Activated CD4-positive, alpha-beta T cell treated with anti-CD3 and anti-CD28 coated beads for 36 hours (primary cell): ENCODE measurements at regions of chr19 and their contacts with region 1.

Region 1: DNA sequence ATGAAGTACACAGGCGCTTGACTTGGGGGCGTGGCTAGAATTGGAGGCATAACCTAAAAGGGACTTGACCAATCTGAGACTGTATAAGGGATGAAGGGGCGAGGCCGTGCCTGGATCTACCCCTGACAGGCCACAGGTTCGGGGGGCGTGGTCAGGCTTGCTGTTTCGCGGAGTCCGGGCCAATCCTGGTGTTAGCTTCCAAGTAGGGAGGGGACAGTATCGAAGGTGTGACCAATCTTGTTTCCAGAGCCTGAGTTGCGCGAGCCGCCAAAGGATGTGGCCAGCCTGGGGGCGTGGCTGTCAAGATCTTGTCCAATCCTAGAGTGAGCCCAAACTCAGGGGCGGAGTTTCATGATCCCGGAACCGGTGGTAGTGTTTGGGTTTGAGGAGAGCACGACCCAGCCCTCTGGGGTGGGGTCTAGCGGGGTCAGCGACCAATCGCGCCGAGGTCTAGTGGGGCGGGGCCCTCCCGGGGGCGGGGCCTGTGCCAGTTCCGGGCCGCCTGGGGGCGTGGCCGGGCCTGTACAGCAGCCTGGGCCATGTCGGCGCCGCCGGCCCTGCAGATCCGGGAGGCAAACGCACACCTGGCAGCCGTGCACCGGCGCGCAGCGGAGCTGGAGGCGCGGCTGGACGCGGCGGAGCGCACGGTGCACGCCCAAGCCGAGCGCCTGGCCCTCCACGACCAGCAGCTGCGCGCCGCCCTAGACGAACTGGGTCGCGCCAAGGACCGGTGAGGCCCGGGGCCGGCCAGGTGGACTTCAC is at the start of gene VMAC:
- DNase-seq: peak; percentile 100
- ATAC-seq: peak; percentile 87
- H3K4me3 Mint-ChIP-seq: peak within 1 kb of the TSS; percentile 94
- H3K27ac Mint-ChIP-seq: peak within 1 kb of the TSS; percentile 98
- H3K4me1 Mint-ChIP-seq: peaks cover 32% of the 10 kb centered on the region
- H3K27me3 Mint-ChIP-seq: no peaks in the 10 kb centered on the region
- total RNA-seq, gene VMAC: 2.3 to 2.8 TPM

Region 2: GRCh38 chr19:4638828-4639530 is 1265.6 kb before region 1 on chr19 and contains the start of gene TNFAIP8L1:
- CTCF ChIA-PET with region 1: no interaction called
- POLR2A ChIA-PET with region 1: no interaction called
- intact Hi-C with region 1: loop called in 1 of 2 experiments (anchors 1 kb)
- DNase-seq: peak; percentile 100
- ATAC-seq: peak; percentile 95
- H3K4me3 Mint-ChIP-seq: peak within 1 kb of the TSS; percentile 90
- H3K27ac Mint-ChIP-seq: peak within 1 kb of the TSS; percentile 97
- H3K4me1 Mint-ChIP-seq: peaks cover 26% of the 10 kb centered on the region
- H3K27me3 Mint-ChIP-seq: no peaks in the 10 kb centered on the region
- total RNA-seq, gene TNFAIP8L1: 14.1 to 15.4 TPM

Region 3: GRCh38 chr19:5665796-5666513 is 238.6 kb before region 1 on chr19:
- CTCF ChIA-PET with region 1: no interaction called
- POLR2A ChIA-PET with region 1: no interaction called
- intact Hi-C with region 1: no loop called
- DNase-seq: no peak
- ATAC-seq: no peak
- H3K4me3 Mint-ChIP-seq: no peak overlapping the region
- H3K27ac Mint-ChIP-seq: peak overlapping the region; percentile 55
- H3K4me1 Mint-ChIP-seq: peaks cover 2% of the 10 kb centered on the region
- H3K27me3 Mint-ChIP-seq: no peaks in the 10 kb centered on the region

Region 4: DNA sequence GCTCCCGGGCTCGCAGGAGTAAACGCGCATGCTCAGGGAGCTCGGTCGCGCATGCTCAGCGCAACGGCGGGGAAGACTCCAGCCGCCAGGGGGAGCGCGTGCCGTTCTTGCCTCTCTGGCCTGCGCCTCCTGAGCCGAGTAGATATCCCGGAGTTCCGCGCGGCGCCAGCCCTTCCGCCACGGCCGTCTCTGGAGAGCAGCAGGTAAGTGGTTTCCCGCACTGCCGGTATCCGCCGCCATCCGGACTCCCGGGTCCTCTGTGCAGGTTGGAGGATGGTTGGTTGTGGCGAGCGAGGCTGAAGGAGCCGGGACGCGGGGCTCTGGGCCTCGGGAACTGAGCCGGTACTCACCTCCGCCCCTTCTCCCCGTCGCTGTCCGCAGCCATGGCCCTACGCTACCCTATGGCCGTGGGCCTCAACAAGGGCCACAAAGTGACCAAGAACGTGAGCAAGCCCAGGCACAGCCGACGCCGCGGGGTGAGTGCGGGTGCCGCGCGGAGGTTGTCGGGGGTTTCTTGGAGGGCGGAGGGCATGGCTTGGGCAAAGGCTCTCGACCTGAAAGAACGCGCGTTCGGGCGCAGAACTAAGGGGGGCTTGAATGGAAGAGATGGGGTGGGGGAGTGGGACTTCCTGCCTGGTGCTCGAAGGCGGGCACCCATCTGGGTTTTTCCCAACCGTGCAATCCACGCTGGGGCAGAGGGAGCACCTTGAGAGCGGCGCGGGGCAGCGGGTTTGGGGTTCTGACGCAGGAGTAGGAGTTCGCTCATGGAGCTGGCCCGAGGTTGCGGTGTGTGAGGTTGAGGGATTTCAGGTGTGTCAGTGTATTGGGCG is 214.2 kb before region 1 on chr19 and contains the start of gene RPL36:
- CTCF ChIA-PET with region 1: no interaction called
- POLR2A ChIA-PET with region 1: interaction called, 3 read pairs
- intact Hi-C with region 1: loop called in 1 of 2 experiments (anchors 1 kb)
- DNase-seq: peak; percentile 100
- ATAC-seq: peak; percentile 54
- H3K4me3 Mint-ChIP-seq: peak within 1 kb of the TSS; percentile 100
- H3K27ac Mint-ChIP-seq: peak within 1 kb of the TSS; percentile 96
- H3K4me1 Mint-ChIP-seq: peaks cover 21% of the 10 kb centered on the region
- H3K27me3 Mint-ChIP-seq: no peaks in the 10 kb centered on the region
- total RNA-seq, gene RPL36: 1,452 to 1,530 TPM

Region 5: DNA sequence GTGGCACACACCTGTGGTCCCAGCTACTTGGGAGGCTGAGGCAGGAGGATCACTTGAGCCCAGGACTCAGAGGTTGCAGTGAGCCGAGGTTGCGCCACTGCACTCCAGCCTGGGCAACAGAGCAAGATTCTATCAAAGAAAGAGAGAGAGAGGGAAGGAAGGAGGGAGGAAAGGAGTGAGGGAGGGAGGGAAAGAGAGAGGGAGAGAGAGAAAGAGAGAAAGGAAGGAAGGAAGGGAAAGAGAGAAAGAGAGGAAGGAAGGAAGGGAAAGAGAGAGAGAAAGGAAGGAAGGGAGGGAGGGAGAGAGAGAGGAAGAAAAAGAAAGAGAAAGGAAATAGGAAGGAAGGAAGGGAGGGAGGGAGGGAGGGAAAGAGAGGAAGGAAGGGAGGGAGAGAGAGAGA is 87.3 kb before region 1 on chr19:
- CTCF ChIA-PET with region 1: no interaction called
- POLR2A ChIA-PET with region 1: no interaction called
- intact Hi-C with region 1: no loop called
- DNase-seq: no peak
- ATAC-seq: no peak
- H3K4me3 Mint-ChIP-seq: no peak overlapping the region
- H3K27ac Mint-ChIP-seq: no peak overlapping the region
- H3K4me1 Mint-ChIP-seq: no peaks in the 10 kb centered on the region
- H3K27me3 Mint-ChIP-seq: peaks cover 3% of the 10 kb centered on the region

Region 6: GRCh38 chr19:5827891-5828660 is 76.5 kb before region 1 on chr19:
- CTCF ChIA-PET with region 1: interaction called, 5 read pairs
- POLR2A ChIA-PET with region 1: interaction called, 25 read pairs
- intact Hi-C with region 1: loop called (anchors 1 kb)
- DNase-seq: peak; percentile 98
- ATAC-seq: peak; percentile 84
- H3K4me3 Mint-ChIP-seq: peak overlapping the region; percentile 92
- H3K27ac Mint-ChIP-seq: peak overlapping the region; percentile 96
- H3K4me1 Mint-ChIP-seq: peaks cover 4% of the 10 kb centered on the region
- H3K27me3 Mint-ChIP-seq: no peaks in the 10 kb centered on the region

Region 7: GRCh38 chr19:6056801-6057650 is 152.5 kb after region 1 on chr19:
- CTCF ChIA-PET with region 1: no interaction called
- POLR2A ChIA-PET with region 1: no interaction called
- intact Hi-C with region 1: no loop called
- DNase-seq: peak; percentile 34
- ATAC-seq: peak; percentile 31
- H3K4me3 Mint-ChIP-seq: no peak overlapping the region
- H3K27ac Mint-ChIP-seq: peak overlapping the region; percentile 56
- H3K4me1 Mint-ChIP-seq: peaks cover 31% of the 10 kb centered on the region
- H3K27me3 Mint-ChIP-seq: peaks cover 4% of the 10 kb centered on the region

Region 8: DNA sequence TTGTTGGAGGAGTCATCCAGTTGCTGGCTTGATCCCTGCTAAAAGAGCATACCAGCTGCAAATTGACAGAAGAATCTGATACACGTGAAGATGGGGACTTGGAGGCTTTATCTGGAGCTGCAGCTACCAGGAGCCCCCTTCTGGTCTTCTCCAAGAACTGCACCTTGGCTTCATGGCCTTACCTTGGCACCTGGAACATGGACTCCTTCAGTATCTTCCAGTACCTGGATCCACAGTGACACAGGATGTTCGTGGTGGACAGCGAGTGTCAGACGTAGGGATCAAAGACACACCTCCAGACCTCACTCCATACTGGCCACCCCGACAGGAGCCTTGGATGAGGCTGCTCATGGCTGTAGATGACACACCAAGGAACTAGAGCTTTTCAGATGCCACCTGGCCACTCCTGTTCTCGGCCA is 221.0 kb after region 1 on chr19:
- CTCF ChIA-PET with region 1: no interaction called
- POLR2A ChIA-PET with region 1: interaction called, 13 read pairs
- intact Hi-C with region 1: no loop called
- DNase-seq: peak; percentile 75
- ATAC-seq: peak; percentile 84
- H3K4me3 Mint-ChIP-seq: no peak overlapping the region
- H3K27ac Mint-ChIP-seq: no peak overlapping the region
- H3K4me1 Mint-ChIP-seq: no peaks in the 10 kb centered on the region
- H3K27me3 Mint-ChIP-seq: peaks cover 3% of the 10 kb centered on the region

Region 9: DNA sequence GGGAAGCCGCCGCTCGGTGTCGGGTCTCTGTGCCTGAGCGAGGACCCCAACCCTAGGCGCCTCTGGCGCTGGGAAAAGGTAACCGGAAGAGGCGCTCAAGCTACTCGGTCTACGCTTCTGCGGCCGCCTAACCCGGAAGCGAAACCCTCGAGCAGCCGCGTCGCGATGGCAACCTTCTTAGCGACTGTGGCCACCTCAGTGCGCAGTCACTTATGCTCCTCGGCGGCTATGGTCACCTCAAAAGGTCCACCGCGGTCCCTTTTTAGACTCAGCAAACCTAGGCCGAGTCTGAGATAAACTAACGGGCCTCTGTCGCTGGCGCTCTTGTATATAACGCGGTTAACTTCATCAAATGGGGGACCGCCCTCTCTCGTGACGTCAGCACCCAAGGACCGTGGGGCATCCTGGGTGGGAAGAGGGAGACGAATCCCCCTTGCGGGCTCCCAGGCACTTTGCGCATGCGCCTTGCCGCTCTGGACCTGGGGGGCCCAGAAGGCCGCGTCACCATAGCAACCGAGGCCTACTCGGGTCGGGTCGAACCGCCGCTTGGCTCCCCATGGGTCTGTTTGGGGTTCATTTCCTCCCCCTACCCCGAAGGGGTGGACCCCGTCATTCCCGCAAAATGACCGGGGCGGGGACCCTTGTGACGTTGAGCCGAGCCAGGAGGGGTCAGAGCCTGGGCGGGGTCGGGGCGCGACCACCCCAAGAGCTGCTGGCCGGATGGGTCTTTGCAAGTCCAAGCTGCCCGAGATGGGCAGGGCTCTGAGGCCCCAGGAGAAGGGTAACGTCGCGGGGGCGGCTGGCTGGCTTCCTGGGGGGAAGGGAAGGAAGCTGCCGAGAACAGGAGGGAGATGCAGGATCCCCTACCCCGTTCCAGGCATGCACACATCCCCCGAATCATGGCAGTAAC is 488.8 kb after region 1 on chr19 and contains the start of gene GTF2F1:
- CTCF ChIA-PET with region 1: no interaction called
- POLR2A ChIA-PET with region 1: no interaction called
- intact Hi-C with region 1: loop called in 1 of 2 experiments (anchors 1 kb)
- DNase-seq: peak; percentile 96
- ATAC-seq: peak; percentile 89
- H3K4me3 Mint-ChIP-seq: peak within 1 kb of the TSS; percentile 85
- H3K27ac Mint-ChIP-seq: peak within 1 kb of the TSS; percentile 91
- H3K4me1 Mint-ChIP-seq: peaks cover 22% of the 10 kb centered on the region
- H3K27me3 Mint-ChIP-seq: no peaks in the 10 kb centered on the region
- total RNA-seq, gene GTF2F1: 60.9 to 78.5 TPM